Natural killer cell (primary cell): ENCODE measurements at regions of chr16 and their contacts with region 1.

Region 1: DNA sequence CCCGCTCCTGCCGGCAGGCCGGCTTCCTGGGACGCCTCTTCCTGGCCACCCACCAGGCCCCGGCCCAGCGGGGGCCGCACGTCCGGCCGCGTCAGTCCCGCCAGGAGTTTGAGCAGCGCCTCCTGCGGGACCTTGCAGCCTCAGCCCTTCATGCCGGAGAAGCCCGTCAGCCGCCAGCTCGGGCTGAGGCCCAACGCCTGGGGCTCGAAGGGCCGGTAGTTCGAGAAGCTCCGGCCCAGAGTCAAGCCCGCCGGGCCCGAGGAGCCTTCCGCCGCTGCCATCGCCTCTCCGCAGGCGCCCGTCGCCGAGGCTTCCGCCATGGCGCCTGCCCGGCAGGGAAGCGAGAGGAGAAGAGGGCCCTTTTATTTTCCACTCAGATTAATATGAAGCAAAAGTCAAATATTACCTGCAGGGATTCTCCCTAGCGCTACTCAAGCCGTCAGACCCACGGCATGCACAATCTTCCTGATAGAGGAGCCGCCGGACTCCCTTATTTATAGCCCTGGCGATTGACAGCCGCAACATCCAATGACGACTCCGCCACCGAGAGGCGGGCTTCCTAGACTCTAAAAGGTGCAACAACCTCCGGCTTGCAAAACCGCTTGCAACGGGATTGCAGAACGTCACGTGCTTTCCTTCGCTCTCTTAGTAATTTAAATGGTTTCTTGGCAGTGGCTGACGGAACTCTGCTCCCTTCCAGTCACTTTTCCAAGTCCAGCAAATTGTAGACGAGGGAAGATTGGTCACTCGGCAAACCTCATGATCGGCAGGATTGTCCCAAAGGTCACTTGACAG is at the start of gene SEPHS2:
- DNase-seq: peak; percentile 94 to 97
- ATAC-seq: peak; percentile 86 to 91 (median 90)
- H3K4me3 ChIP-seq: peak within 1 kb of the TSS; percentile 87
- H3K4me3 Mint-ChIP-seq: peak within 1 kb of the TSS; percentile 96
- H3K27ac ChIP-seq: peak within 1 kb of the TSS; percentile 91
- H3K27ac Mint-ChIP-seq: peak within 1 kb of the TSS; percentile 94 to 95
- H3K4me1 ChIP-seq: peaks cover 44% of the 10 kb centered on the region
- H3K4me1 Mint-ChIP-seq: peaks cover 36 to 38% of the 10 kb centered on the region in 2 donors
- H3K27me3 ChIP-seq: no peaks in the 10 kb centered on the region
- H3K27me3 Mint-ChIP-seq: no peaks in the 10 kb centered on the region
- CTCF ChIP-seq: peak; percentile 34
- total RNA-seq, gene SEPHS2: 25.5 to 37.6 (median 35.0) TPM

Region 2: GRCh38 chr16:30602616-30603277 is 157.1 kb after region 1 on chr16:
- intact Hi-C with region 1: loop called (anchors 1 kb)
- DNase-seq: no peak
- ATAC-seq: no peak
- H3K4me3 ChIP-seq: no peak overlapping the region
- H3K4me3 Mint-ChIP-seq: no peak overlapping the region
- H3K27ac ChIP-seq: no peak overlapping the region
- H3K27ac Mint-ChIP-seq: no peak overlapping the region
- H3K4me1 ChIP-seq: peaks cover 3% of the 10 kb centered on the region
- H3K4me1 Mint-ChIP-seq: no peaks in the 10 kb centered on the region
- H3K27me3 ChIP-seq: no peaks in the 10 kb centered on the region
- H3K27me3 Mint-ChIP-seq: no peaks in the 10 kb centered on the region
- CTCF ChIP-seq: no peak